ENCODE measurements at regions of chr1 and their contacts with region 1.

Region 1: GRCh38 chr1:24652382-24652781 is 9.3 kb downstream of the SRRM1 start:
- DNase-seq: no peak
- ATAC-seq: no peak
- H3K4me3 Mint-ChIP-seq: no peak overlapping the region
- H3K27ac Mint-ChIP-seq: peak overlapping the region; percentile 38
- H3K4me1 Mint-ChIP-seq: peaks cover 43% of the 10 kb centered on the region
- H3K27me3 Mint-ChIP-seq: no peaks in the 10 kb centered on the region

Region 2: DNA sequence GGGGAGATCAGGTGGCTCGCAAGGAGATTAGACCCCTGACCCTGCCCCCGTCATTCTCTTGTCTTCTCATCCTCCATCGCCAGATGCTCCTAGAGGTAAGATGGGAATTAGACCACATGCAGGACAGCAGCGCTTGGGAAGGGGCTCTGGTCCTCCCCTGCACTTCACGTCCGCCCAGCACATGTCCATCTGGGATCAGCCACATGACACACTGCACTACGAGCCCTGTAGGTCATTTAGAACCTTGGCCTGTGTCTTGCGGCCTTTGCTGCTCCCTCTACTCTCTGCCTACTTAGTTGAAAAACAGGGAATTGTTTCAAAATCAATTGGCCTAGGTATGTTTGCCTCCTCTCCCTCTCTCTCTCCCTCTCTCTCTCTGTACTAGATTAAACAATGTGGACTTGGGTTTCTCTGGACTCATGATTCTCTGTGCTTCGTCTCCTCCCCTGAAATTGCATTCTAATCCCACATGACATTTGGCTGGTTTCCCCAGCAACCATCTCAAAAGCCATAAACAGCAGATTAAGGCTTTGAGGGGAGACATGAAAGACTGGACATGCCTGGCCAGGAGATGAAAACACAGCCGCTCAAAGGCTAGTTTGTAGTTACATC is 100.3 kb before region 1 on chr1:
- CTCF ChIA-PET with region 1: no interaction called
- POLR2A ChIA-PET with region 1: no interaction called
- intact Hi-C with region 1: no loop called
- DNase-seq: no peak
- ATAC-seq: no peak
- H3K4me3 Mint-ChIP-seq: no peak overlapping the region
- H3K27ac Mint-ChIP-seq: no peak overlapping the region
- H3K4me1 Mint-ChIP-seq: peaks cover 8% of the 10 kb centered on the region
- H3K27me3 Mint-ChIP-seq: peaks cover under 1% of the 10 kb centered on the region

Region 3: DNA sequence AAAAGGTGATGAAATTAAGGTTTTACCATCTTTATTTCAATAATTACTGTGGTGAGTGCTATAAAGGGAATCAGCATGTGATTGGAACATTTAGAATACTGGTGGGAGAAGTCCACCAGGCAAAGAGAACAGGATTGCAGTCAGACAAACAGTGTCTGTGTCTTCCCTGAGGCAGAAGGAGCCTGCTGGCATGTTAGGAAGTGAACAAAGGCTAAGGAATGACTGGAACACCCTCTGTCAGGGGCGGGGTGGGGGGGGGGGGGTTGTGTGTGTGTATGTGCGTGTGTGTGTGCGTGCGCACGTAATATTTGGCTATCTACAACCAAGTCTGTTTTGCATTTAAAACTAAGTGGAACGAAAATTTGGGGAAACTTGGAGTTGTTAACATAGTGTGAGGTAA is 21.0 kb after region 1 on chr1:
- CTCF ChIA-PET with region 1: interaction called, 3 read pairs
- POLR2A ChIA-PET with region 1: interaction called, 4 read pairs
- intact Hi-C with region 1: loop called in 1 of 2 experiments (anchors 2 kb)
- DNase-seq: no peak
- ATAC-seq: no peak
- H3K4me3 Mint-ChIP-seq: no peak overlapping the region
- H3K27ac Mint-ChIP-seq: peak overlapping the region; percentile 30
- H3K4me1 Mint-ChIP-seq: no peaks in the 10 kb centered on the region
- H3K27me3 Mint-ChIP-seq: no peaks in the 10 kb centered on the region